A549 (cell line): ENCODE measurements at regions of chr12 and their contacts with region 1.

Region 1: GRCh38 chr12:116164250-116165035 is 113.0 kb downstream of the MED13L start:
- DNase-seq: no peak
- ATAC-seq: peak; percentile 18 to 54; a peak in 5 of 6 replicates
- H3K4me3 ChIP-seq: no peak overlapping the region
- H3K27ac ChIP-seq: peak overlapping the region in 1 of 2 experiments; percentile 4; a peak in 1 of 6 replicates
- H3K4me1 ChIP-seq: peaks cover 79% of the 10 kb centered on the region
- CTCF ChIP-seq: no peak
- EP300 ChIP-seq: no peak
- POLR2A ChIP-seq: no peak
- RAD21 ChIP-seq: no peak

Region 2: DNA sequence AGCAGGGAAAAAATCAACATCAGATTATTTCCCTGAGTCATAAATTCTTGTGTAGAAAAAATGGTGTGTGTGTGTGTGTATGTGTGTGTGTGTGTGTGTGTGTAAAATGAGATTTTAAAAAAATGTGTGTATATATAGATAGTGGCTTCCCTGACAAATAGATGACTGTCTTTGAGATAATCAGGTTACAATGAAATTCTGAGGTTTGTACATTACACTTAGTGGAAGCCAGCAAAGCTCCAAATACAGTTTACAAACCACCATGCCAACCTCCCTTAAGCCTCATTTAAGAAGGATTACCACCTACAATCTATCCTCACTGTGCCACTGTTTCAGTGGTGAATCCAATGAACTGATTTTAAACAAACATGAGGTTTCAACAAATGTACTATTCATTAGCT is 19.3 kb after region 1 on chr12:
- CTCF ChIA-PET with region 1: no interaction called
- POLR2A ChIA-PET with region 1: no interaction called
- DNase-seq: no peak
- ATAC-seq: no peak
- H3K4me3 ChIP-seq: no peak overlapping the region
- H3K27ac ChIP-seq: no peak overlapping the region
- H3K4me1 ChIP-seq: peaks cover 58% of the 10 kb centered on the region
- CTCF ChIP-seq: no peak
- EP300 ChIP-seq: no peak
- POLR2A ChIP-seq: no peak
- RAD21 ChIP-seq: no peak

Region 3: GRCh38 chr12:116266168-116266601 is 101.7 kb after region 1 on chr12:
- CTCF ChIA-PET with region 1: no interaction called
- POLR2A ChIA-PET with region 1: interaction called, 10 read pairs
- DNase-seq: peak; percentile 29 to 57
- ATAC-seq: peak; percentile 72 to 90; a peak in 5 of 6 replicates
- H3K4me3 ChIP-seq: no peak overlapping the region
- H3K27ac ChIP-seq: peak overlapping the region in 1 of 2 experiments; percentile 33; a peak in 2 of 6 replicates
- H3K4me1 ChIP-seq: peaks cover 93% of the 10 kb centered on the region
- CTCF ChIP-seq: peak; percentile 13; the same call in 1 of the 3 replicates
- EP300 ChIP-seq: no peak
- POLR2A ChIP-seq: no peak
- RAD21 ChIP-seq: peak in 1 of 2 experiments; percentile 37; a peak in 1 of 5 replicates